GM12878 (cell line): ENCODE measurements at regions of chr15 and their contacts with region 1.

Region 1: DNA sequence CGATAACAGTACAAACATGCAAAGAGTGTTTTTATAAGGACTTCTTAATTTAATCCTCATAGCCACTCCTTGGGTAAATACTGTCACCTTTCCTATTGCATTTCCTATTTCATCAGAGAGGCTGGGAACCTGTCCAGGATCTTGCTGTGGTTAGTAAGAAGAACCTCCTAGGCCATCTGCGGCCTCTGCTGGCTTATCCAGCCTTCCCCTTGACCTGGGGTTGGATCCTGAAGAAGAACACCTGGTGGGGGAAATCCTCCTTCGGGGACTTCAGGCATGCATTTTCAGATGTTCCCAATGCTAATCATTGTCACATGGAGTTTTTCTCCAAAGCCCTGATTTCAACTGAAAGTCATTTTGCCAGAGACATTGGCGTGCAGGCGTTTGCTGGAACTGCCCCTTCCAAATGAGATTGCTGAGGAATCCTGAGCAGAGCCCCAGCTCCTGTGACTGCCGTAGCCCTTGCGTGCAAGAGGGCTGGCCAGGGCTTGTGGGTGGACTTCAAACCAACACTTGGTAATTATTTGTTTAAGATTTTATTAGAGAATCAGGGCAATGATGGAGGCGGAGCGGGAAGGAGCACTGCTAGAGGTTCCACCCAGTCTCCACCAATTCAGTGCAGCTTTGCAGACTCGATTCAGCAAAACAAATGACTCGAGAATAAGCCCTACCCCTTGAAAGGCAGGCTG is 25.6 kb downstream of the GLDN start:
- DNase-seq: no peak
- ATAC-seq: no peak
- H3K4me3 ChIP-seq: no peak overlapping the region
- H3K27ac ChIP-seq: no peak overlapping the region
- H3K4me1 ChIP-seq: peaks cover 4% of the 10 kb centered on the region
- H3K27me3 ChIP-seq: peaks cover 5 to 8% of the 10 kb centered on the region in 2 experiments; a peak in 3 of 4 replicates
- CTCF ChIP-seq: no peak
- EP300 ChIP-seq: no peak
- POLR2A ChIP-seq: no peak
- RAD21 ChIP-seq: no peak

Region 2: DNA sequence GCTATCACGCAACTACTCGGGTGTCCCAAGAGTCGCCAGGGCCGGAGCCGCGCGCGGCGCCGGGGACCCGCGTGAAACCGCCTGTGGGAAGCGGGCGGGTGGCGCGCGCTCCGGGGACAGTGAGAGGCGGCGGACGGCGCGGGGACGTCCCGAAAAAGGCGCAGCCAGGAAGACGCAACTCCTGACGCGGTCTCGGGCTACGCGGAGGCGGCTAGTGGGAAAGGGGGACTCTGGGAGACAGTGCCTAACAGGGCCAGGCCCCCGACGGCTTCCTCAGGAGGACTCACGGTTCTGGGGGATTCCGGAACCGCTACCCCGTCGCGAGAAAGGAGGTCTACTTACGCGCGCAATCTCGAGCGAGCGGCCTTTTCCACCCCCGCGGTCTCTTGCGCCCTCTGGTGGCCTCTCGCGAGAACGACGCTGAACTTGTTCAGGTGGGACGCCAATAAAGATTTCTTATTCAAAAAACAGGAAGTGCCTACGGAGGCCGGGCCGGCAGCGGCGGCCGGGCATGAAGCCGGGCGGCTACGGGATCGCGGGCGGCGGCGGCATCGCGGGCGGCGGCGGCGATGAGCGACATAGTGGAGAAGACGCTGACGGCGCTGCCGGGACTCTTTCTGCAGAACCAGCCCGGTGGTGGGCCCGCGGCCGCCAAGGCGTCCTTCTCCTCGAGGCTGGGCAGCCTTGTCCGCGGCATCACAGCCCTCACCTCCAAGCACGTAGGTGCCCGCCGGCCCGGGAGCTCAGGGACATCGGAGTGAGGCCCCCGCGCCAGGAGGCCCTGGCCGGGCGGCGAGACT is 458.7 kb before region 1 on chr15 and contains the start of gene AP4E1:
- CTCF ChIA-PET with region 1: no interaction called
- POLR2A ChIA-PET with region 1: no interaction called
- RAD21 ChIA-PET with region 1: no interaction called
- SMC1A ChIA-PET with region 1: no interaction called
- in situ Hi-C with region 1: no loop called
- intact Hi-C with region 1: no loop called
- DNase-seq: peak; percentile 79
- ATAC-seq: peak; percentile 74
- H3K4me3 ChIP-seq: peak within 1 kb of the TSS; percentile 99
- H3K27ac ChIP-seq: peak within 1 kb of the TSS; percentile 90
- H3K4me1 ChIP-seq: no peaks in the 10 kb centered on the region; the same call in 1 of the 2 replicates
- H3K27me3 ChIP-seq: no peaks in the 10 kb centered on the region
- CTCF ChIP-seq: peak; percentile 92 to 98 (median 96); a peak in 5 of 6 replicates
- EP300 ChIP-seq: peak; percentile 26 to 35; a peak in 1 of 4 replicates
- POLR2A ChIP-seq: peak; percentile 86
- RAD21 ChIP-seq: peak; percentile 95
- polyA plus RNA-seq, gene AP4E1: 1.2 to 1.6 TPM

Region 3: DNA sequence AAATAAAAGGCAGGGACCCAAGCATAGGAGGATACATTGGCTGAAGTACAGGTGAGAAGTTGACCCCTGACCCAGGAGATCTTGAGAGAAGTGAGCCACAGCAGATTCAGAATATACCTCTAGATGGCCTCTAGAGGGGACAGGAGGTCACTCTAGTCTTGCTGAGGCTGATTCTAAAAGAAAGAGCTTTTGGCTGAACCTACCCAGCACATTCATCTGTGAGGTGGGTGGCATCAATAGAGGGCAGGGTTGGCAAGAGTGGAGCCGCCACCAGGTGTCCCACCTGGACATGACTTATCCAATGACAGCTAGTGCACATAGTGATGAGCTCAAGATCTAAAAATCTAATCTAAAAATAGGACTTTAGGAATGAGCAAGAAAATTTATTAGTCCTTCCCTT is 80.3 kb before region 1 on chr15:
- CTCF ChIA-PET with region 1: interaction called, 9 read pairs
- POLR2A ChIA-PET with region 1: no interaction called
- RAD21 ChIA-PET with region 1: interaction called, 10 read pairs
- SMC1A ChIA-PET with region 1: interaction called, 10 read pairs
- in situ Hi-C with region 1: no loop called
- intact Hi-C with region 1: no loop called
- DNase-seq: no peak
- ATAC-seq: peak; percentile 49
- H3K4me3 ChIP-seq: no peak overlapping the region
- H3K27ac ChIP-seq: no peak overlapping the region
- H3K4me1 ChIP-seq: peaks cover 10% of the 10 kb centered on the region
- H3K27me3 ChIP-seq: peaks cover 0 to 1% of the 10 kb centered on the region in 2 experiments; a peak in 3 of 4 replicates
- CTCF ChIP-seq: peak; percentile 14 to 32 (median 20); a peak in 4 of 6 replicates
- EP300 ChIP-seq: no peak
- POLR2A ChIP-seq: no peak
- RAD21 ChIP-seq: peak; percentile 40

Region 4: DNA sequence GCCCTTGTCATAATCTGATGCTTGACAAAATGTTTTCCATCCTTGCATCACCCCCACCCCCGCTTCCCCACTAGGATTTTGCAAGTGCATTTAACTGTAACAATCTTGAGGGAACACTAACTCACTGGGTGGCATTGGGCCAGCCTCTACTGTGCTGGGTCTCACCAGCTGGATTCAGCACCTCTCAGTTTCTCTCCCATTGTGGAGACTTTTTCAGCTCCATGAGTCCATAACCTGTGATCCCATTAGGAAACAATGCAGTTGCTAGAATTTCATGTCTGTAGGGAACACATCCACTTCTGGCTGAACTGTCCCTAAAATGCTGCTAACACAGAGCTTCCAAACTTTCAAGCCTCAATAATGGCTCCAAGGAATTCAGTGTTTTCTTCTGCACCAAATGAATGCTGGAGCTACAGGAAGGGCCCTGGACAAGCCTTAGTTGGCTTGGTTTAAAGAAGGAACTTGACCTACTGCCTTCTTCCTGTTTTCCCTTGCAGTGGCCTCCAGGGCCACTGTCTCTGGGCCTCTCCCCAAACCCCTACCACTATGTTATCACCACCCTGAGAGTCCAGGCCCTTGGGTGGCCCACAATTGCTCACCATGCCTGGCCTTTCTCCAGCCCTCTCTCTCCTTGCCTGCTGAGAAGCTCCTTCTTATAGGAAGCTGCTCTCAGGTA is 44.3 kb before region 1 on chr15:
- CTCF ChIA-PET with region 1: no interaction called
- POLR2A ChIA-PET with region 1: no interaction called
- RAD21 ChIA-PET with region 1: no interaction called
- SMC1A ChIA-PET with region 1: no interaction called
- in situ Hi-C with region 1: no loop called
- intact Hi-C with region 1: no loop called
- DNase-seq: no peak
- ATAC-seq: no peak
- H3K4me3 ChIP-seq: no peak overlapping the region
- H3K27ac ChIP-seq: no peak overlapping the region
- H3K4me1 ChIP-seq: no peaks in the 10 kb centered on the region
- H3K27me3 ChIP-seq: peaks cover 6% of the 10 kb centered on the region in 2 experiments
- CTCF ChIP-seq: no peak
- EP300 ChIP-seq: no peak
- POLR2A ChIP-seq: no peak
- RAD21 ChIP-seq: no peak

Region 5: DNA sequence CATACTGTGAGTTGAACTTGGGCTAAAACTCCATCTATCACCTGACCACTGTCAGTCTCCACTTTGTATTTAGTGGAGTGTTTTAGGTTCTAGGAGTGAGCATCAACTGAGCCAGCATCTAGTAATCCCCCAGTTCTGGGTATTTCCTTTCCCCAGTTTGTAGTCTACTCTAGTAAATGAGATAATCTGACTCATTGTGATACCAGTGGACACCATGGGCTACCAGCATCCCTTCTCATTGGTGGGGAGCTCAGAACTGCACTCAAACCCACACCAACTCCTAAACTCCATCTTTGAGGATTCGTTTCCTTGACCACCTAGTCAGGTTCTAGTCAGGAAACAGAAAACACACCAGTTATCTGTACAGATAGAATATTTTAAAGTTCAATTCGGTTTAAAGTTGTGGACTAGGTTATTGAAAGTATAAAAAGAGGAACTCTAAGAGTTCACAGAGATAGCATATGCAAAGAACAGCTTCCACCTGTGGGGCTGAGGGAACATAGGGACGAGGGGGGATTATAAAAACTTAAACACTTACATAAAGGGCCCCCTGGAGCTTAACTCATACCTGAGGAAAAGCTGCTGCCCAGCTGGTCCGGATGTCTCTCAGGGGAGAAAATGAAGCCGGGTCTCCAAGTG is 568.5 kb after region 1 on chr15:
- CTCF ChIA-PET with region 1: no interaction called
- POLR2A ChIA-PET with region 1: no interaction called
- RAD21 ChIA-PET with region 1: no interaction called
- SMC1A ChIA-PET with region 1: no interaction called
- in situ Hi-C with region 1: no loop called
- intact Hi-C with region 1: no loop called
- DNase-seq: peak; percentile 60
- ATAC-seq: peak; percentile 98
- H3K4me3 ChIP-seq: no peak overlapping the region
- H3K27ac ChIP-seq: peak overlapping the region; percentile 80
- H3K4me1 ChIP-seq: peaks cover 20% of the 10 kb centered on the region
- H3K27me3 ChIP-seq: no peaks in the 10 kb centered on the region
- CTCF ChIP-seq: no peak
- EP300 ChIP-seq: no peak
- POLR2A ChIP-seq: no peak
- RAD21 ChIP-seq: no peak